Naive thymus-derived CD4-positive, alpha-beta T cell (primary cell): ENCODE measurements at regions of chr10 and their contacts with region 1.

Region 1: GRCh38 chr10:63083904-63084689 is 49.0 kb upstream of the NRBF2 start:
- DNase-seq: peak in 7 of 9 donors; percentile 20 to 58 (median 43)
- ATAC-seq: peak; percentile 78
- H3K4me3 ChIP-seq: no peak overlapping the region
- H3K4me3 Mint-ChIP-seq: no peak overlapping the region
- H3K27ac ChIP-seq: no peak overlapping the region
- H3K27ac Mint-ChIP-seq: no peak overlapping the region
- H3K4me1 ChIP-seq: no peaks in the 10 kb centered on the region
- H3K4me1 Mint-ChIP-seq: no peaks in the 10 kb centered on the region
- H3K27me3 ChIP-seq: no peaks in the 10 kb centered on the region
- H3K27me3 Mint-ChIP-seq: peaks cover 4 to 31% (median 6%) of the 10 kb centered on the region in 5 donors

Region 2: GRCh38 chr10:62268399-62269114 is 815.5 kb before region 1 on chr10 and contains the start of gene RTKN2:
- CTCF ChIA-PET with region 1: interaction called, 3 read pairs
- POLR2A ChIA-PET with region 1: no interaction called
- intact Hi-C with region 1: loop called (anchors 2 to 10 kb)
- DNase-seq: peak; percentile 52 to 76 (median 64)
- ATAC-seq: peak; percentile 89
- H3K4me3 ChIP-seq: peak within 1 kb of the TSS; percentile 69
- H3K4me3 Mint-ChIP-seq: peak within 1 kb of the TSS; percentile 84 to 96 (median 88)
- H3K27ac ChIP-seq: peak within 1 kb of the TSS; percentile 12
- H3K27ac Mint-ChIP-seq: peak within 1 kb of the TSS in 8 of 9 donors; percentile 8 to 75 (median 46)
- H3K4me1 ChIP-seq: peaks cover 0 to 5% of the 10 kb centered on the region in 2 donors
- H3K4me1 Mint-ChIP-seq: peaks cover 9 to 19% (median 14%) of the 10 kb centered on the region in 7 donors
- H3K27me3 ChIP-seq: peaks cover 0 to 9% of the 10 kb centered on the region in 2 donors
- H3K27me3 Mint-ChIP-seq: peaks cover 4 to 43% (median 16%) of the 10 kb centered on the region in 5 donors
- total RNA-seq, gene RTKN2: 1.4 to 7.8 (median 3.0) TPM

Region 3: DNA sequence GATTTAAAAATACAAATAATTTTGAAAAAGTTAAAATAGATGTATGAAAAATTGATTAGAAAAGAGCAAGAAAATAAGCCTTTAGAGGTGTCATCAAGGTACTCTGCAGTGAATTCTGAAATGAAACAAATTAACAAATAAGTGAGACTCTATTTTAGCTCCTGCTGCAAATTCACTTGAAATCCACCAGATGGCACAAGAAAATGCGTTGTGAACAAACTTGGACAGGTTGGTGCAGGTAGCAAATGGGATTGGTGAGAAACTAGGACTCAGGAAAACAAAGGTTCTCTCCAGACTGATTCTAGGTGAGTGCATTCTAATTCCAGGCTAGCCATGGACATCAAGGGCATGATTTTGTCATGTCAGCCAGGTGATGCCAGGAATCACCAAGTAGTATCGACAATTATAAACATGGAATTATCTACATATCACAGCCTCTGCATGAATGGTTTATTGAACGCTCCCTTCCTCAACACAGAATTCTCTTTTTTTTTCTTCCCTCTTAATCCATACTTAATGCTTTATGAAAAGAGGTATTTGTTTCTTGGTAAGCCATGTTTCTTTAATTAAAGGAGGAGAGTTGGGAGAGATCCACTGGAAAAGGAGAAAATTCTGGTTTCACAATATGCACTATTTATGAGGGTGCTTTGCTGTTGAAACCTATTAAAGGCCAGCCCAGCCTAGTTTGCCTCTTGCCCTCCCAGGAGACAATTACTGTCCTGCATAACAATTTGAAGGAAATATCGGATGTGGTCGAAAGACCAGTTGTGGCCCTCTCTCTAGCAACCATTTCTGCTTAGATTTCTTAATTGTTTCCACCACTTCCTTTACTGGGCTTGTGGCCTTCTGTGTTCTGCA is 591.9 kb before region 1 on chr10:
- CTCF ChIA-PET with region 1: interaction called, 4 read pairs
- POLR2A ChIA-PET with region 1: no interaction called
- intact Hi-C with region 1: loop called (anchors 1 to 2 kb)
- DNase-seq: peak in 7 of 9 donors; percentile 14 to 53 (median 40)
- ATAC-seq: peak; percentile 54
- H3K4me3 ChIP-seq: no peak overlapping the region
- H3K4me3 Mint-ChIP-seq: no peak overlapping the region
- H3K27ac ChIP-seq: no peak overlapping the region
- H3K27ac Mint-ChIP-seq: no peak overlapping the region
- H3K4me1 ChIP-seq: no peaks in the 10 kb centered on the region
- H3K4me1 Mint-ChIP-seq: peaks cover 0 to 2% (median 0%) of the 10 kb centered on the region in 7 donors
- H3K27me3 ChIP-seq: no peaks in the 10 kb centered on the region
- H3K27me3 Mint-ChIP-seq: peaks cover 0 to 29% (median 4%) of the 10 kb centered on the region in 5 donors

Region 4: DNA sequence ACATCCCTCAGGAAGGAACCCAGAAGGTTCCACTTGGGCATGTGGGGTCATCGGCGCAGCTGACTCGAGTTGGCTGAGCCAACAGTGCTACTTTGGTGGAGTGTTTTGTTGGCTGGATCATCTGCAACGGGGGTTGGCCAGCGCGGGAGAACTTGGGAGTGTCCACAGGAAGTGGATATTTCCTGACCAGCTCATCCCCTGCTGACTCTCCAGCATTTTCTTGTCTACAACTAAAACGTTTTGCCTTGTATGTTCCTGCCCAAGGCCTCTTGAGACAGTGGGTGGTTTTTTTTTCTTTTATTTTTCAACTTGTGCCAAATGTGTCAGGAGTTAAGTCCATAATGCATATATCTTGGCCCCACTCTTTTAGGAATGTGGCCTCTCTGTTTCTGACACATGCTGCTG is 501.3 kb before region 1 on chr10:
- CTCF ChIA-PET with region 1: no interaction called
- POLR2A ChIA-PET with region 1: no interaction called
- intact Hi-C with region 1: no loop called
- DNase-seq: no peak
- ATAC-seq: no peak
- H3K4me3 ChIP-seq: no peak overlapping the region
- H3K4me3 Mint-ChIP-seq: no peak overlapping the region
- H3K27ac ChIP-seq: no peak overlapping the region
- H3K27ac Mint-ChIP-seq: no peak overlapping the region
- H3K4me1 ChIP-seq: no peaks in the 10 kb centered on the region
- H3K4me1 Mint-ChIP-seq: no peaks in the 10 kb centered on the region
- H3K27me3 ChIP-seq: no peaks in the 10 kb centered on the region
- H3K27me3 Mint-ChIP-seq: peaks cover 0 to 15% (median 5%) of the 10 kb centered on the region in 5 donors

Region 5: GRCh38 chr10:62594093-62594520 is 490.0 kb before region 1 on chr10:
- CTCF ChIA-PET with region 1: interaction called, 12 read pairs
- POLR2A ChIA-PET with region 1: interaction called, 3 read pairs
- intact Hi-C with region 1: loop called (anchors 1 kb)
- DNase-seq: peak in 8 of 9 donors; percentile 22 to 58 (median 40)
- ATAC-seq: peak; percentile 84
- H3K4me3 ChIP-seq: no peak overlapping the region
- H3K4me3 Mint-ChIP-seq: no peak overlapping the region
- H3K27ac ChIP-seq: no peak overlapping the region
- H3K27ac Mint-ChIP-seq: no peak overlapping the region
- H3K4me1 ChIP-seq: no peaks in the 10 kb centered on the region
- H3K4me1 Mint-ChIP-seq: peaks cover 0 to 4% (median 0%) of the 10 kb centered on the region in 7 donors
- H3K27me3 ChIP-seq: no peaks in the 10 kb centered on the region
- H3K27me3 Mint-ChIP-seq: peaks cover 0 to 26% (median 10%) of the 10 kb centered on the region in 5 donors

Region 6: GRCh38 chr10:62858364-62858763 is 225.7 kb before region 1 on chr10:
- CTCF ChIA-PET with region 1: no interaction called
- POLR2A ChIA-PET with region 1: no interaction called
- intact Hi-C with region 1: loop called in 1 of 2 experiments (anchors 5 kb)
- DNase-seq: no peak
- ATAC-seq: no peak
- H3K4me3 ChIP-seq: no peak overlapping the region
- H3K4me3 Mint-ChIP-seq: no peak overlapping the region
- H3K27ac ChIP-seq: no peak overlapping the region
- H3K27ac Mint-ChIP-seq: no peak overlapping the region
- H3K4me1 ChIP-seq: peaks cover 0 to 38% of the 10 kb centered on the region in 2 donors
- H3K4me1 Mint-ChIP-seq: peaks cover 13 to 54% (median 24%) of the 10 kb centered on the region in 7 donors
- H3K27me3 ChIP-seq: no peaks in the 10 kb centered on the region
- H3K27me3 Mint-ChIP-seq: peaks cover 0 to 18% (median 13%) of the 10 kb centered on the region in 5 donors